GM10248 (cell line): ENCODE measurements at regions of chr19 and their contacts with region 1.

Region 1: DNA sequence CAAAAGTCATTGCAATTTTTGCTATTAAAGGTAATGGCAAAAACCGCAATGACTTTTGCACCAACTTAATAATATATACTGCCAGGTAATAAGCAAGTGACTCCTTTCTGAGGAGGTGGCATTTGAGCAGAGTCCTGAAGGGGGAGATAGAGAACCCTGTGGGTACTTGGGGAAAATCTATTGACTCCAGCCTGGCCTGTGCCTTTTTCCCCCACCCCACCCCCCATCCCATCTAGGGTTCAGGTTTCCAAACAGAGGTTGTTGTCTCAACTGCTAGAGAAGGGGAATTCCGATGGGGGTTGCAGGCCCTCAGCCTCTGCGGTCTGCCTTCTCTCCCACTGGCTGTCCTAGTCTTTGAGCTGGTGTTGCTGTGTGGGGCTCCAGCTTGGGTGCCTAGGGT is 11.5 kb downstream of the S1PR2 start:
- DNase-seq: peak; percentile 74
- CTCF ChIP-seq: peak; percentile 57

Region 2: DNA sequence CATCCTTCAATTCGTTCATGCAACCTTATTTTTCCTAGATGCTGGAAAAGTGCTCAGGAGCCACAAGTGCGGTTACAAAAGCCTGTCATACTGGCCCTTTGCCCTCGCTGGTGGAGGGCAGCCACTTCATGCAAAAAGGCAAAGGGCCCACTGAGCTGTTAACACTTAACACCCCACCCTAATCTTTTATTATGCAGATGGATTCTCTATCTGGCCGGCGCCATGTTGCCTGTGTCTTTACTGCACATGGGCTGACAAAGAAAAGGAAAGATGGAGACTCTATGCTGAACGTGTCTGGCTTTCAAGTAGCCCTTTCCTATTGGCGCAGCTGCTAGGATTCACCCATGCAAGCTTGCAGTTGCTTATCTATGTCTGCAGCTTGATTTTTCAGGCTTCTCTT is 1030.1 kb before region 1 on chr19:
- CTCF ChIA-PET with region 1: no interaction called
- POLR2A ChIA-PET with region 1: no interaction called
- DNase-seq: no peak
- CTCF ChIP-seq: no peak

Region 3: GRCh38 chr19:10201176-10201575 is 18.5 kb before region 1 on chr19:
- CTCF ChIA-PET with region 1: interaction called, 13 read pairs
- POLR2A ChIA-PET with region 1: interaction called, 4 read pairs
- DNase-seq: no peak
- CTCF ChIP-seq: no peak

Region 4: GRCh38 chr19:10206226-10206885 is 13.3 kb before region 1 on chr19:
- CTCF ChIA-PET with region 1: interaction called, 13 read pairs
- POLR2A ChIA-PET with region 1: interaction called, 4 read pairs
- DNase-seq: no peak
- CTCF ChIP-seq: no peak

Region 5: DNA sequence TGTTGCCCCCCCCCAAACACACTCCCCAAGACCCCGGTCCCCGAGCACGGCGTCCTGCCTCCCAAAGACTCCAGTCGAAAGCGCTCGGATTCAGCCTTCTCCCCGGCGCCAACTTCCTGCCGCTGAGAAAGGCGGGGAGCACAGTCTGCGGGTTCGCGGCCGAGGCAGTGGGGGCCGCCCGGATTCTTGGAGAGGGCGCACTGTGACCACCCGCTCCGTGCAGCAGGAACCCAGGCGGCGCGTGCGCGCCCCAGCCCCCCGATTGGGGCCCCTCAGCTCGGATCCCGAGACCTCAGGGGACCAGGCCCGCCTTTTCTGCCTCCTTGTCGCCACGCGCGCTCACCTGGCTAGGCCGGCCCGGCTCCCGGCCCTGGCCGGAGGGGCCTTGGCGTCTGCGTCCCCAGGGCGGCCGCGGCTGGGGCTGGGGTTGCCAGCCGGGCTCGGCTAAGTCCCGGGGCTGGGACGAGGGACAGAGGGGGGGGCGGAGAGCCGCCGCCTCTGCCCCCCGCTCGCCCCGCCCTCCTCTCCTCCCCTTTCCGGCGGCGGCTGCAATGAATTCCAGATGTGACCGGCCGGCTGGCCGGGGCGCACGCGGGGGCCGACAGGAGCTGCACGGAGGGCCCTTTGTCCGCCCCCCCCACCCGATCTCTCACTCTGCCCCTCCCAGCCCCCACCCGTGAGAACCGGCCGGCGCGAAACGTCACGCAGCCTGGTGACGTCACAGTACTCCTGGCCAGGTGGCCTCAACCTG is 11.4 kb after region 1 on chr19 and contains the start of gene S1PR2:
- CTCF ChIA-PET with region 1: interaction called, 21 read pairs
- POLR2A ChIA-PET with region 1: interaction called, 3 read pairs
- DNase-seq: peak; percentile 88
- CTCF ChIP-seq: no peak

Region 6: GRCh38 chr19:10491472-10492047 is 271.9 kb after region 1 on chr19:
- CTCF ChIA-PET with region 1: no interaction called
- POLR2A ChIA-PET with region 1: no interaction called
- DNase-seq: no peak
- CTCF ChIP-seq: no peak

Region 7: GRCh38 chr19:10960314-10961072 is 740.8 kb after region 1 on chr19 and contains the start of gene SMARCA4:
- CTCF ChIA-PET with region 1: no interaction called
- POLR2A ChIA-PET with region 1: no interaction called
- DNase-seq: peak; percentile 99
- CTCF ChIP-seq: no peak